ENCODE measurements at regions of chr19 and their contacts with region 1.

Region 1: GRCh38 chr19:39412100-39412866 is at the start of gene PLEKHG2:
- DNase-seq: peak; percentile 99
- H3K4me3 ChIP-seq: peak within 1 kb of the TSS; percentile 70 to 93 (median 92)
- H3K27ac ChIP-seq: peak within 1 kb of the TSS; percentile 97
- H3K4me1 ChIP-seq: peaks cover 38% of the 10 kb centered on the region
- H3K27me3 ChIP-seq: no peaks in the 10 kb centered on the region
- CTCF ChIP-seq: peak; percentile 42 to 94
- total RNA-seq, gene PLEKHG2: 15.5 to 40.6 TPM

Region 2: GRCh38 chr19:39125554-39126311 is 286.6 kb before region 1 on chr19 and contains the start of gene PAK4:
- CTCF ChIA-PET with region 1: no interaction called
- dilution Hi-C with region 1: no loop called
- in situ Hi-C with region 1: no loop called
- intact Hi-C with region 1: loop called (anchors 2 kb)
- DNase-seq: peak; percentile 97
- H3K4me3 ChIP-seq: peak within 1 kb of the TSS; percentile 64 to 86 (median 80)
- H3K27ac ChIP-seq: peak within 1 kb of the TSS; percentile 65
- H3K4me1 ChIP-seq: peaks cover 13% of the 10 kb centered on the region
- H3K27me3 ChIP-seq: no peaks in the 10 kb centered on the region
- CTCF ChIP-seq: no peak
- total RNA-seq, gene PAK4: 8.8 to 45.1 TPM

Region 3: GRCh38 chr19:39341719-39342604 is 70.3 kb before region 1 on chr19 and contains the start of gene SAMD4B:
- CTCF ChIA-PET with region 1: interaction called, 6 read pairs
- dilution Hi-C with region 1: no loop called
- in situ Hi-C with region 1: no loop called
- intact Hi-C with region 1: loop called (anchors 1 kb)
- DNase-seq: peak; percentile 96
- H3K4me3 ChIP-seq: peak within 1 kb of the TSS; percentile 79 to 83 (median 80)
- H3K27ac ChIP-seq: peak within 1 kb of the TSS; percentile 81
- H3K4me1 ChIP-seq: peaks cover 6% of the 10 kb centered on the region
- H3K27me3 ChIP-seq: no peaks in the 10 kb centered on the region
- CTCF ChIP-seq: peak; percentile 32 to 71
- total RNA-seq, gene SAMD4B: 54.3 to 95.2 TPM

Region 4: DNA sequence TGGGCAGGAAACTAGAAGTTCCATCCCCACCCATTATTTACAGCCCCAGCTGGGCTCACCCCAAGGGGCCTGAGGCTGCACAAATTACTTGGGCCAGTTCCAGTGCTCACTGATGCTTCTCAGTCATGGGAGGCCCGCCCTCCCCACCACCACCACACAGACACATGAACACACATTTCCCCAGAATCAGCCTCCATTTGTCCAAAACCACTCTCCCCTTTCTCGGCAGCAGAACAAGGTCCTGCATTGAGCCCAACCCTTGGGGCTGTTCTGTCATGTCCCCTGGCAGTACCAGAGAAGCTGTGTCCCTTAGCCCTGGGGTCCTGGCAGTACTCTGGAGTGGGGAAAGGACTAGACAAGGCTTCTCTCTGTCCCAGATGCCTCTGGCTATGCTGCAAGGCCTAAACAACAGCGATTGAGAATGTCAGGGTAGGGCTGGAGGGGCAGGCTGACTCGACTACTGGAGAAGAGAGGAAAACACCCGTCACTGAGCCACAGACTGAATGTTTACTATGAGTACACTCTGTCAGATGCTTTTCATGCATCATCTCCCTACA is 48.3 kb before region 1 on chr19:
- CTCF ChIA-PET with region 1: no interaction called
- dilution Hi-C with region 1: no loop called
- in situ Hi-C with region 1: no loop called
- intact Hi-C with region 1: no loop called
- DNase-seq: no peak
- H3K4me3 ChIP-seq: no peak overlapping the region
- H3K27ac ChIP-seq: no peak overlapping the region
- H3K4me1 ChIP-seq: peaks cover 19% of the 10 kb centered on the region
- H3K27me3 ChIP-seq: no peaks in the 10 kb centered on the region
- CTCF ChIP-seq: no peak

Region 5: DNA sequence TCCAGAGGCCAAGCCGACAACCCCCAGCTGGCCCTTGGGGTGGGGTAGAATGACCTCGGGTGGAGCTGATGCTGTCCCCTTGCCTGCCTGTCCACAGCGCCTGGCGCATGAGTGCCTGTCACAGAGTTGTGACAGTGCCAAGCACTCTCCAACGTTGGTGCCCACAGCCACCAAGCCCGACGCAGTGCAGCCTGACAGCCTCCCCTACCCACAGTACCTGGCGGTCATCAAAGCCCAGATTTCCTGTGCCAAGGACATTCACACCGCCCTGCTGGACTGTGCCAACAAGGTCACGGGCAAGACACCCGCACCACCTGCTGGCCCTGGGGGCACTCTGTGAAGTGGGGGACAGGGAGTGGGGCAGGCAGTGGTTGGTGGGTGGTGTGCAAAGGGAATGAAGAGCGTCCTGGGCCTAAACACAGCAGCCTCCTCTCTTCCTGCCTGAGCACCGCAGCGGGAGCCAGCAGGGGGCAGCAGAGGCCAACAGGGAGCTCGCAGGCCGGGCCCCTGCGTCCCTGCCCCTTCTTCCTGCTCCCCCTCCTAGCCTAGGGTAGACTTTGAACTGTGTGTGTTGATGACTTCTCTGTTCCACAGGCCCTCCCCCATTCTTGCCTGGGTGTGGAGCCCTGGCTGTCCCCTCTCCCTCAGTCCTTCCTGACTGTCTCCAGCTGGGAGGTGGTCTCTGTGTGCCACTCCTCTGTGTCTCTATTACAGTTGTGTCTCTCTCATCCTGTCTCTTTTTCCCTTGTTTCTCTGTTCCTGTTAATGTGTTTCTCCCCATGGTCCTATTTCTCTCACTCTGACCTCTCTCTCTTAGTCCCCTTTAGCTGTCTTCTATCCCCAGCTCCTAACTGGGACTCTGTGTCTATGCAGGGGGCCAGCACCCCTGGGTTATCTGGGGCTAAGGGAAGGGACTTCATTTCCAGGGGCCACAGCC is 14.7 kb before region 1 on chr19:
- CTCF ChIA-PET with region 1: interaction called, 11 read pairs
- dilution Hi-C with region 1: no loop called
- in situ Hi-C with region 1: no loop called
- intact Hi-C with region 1: loop called (anchors 1 kb)
- DNase-seq: peak; percentile 75
- H3K4me3 ChIP-seq: no peak overlapping the region
- H3K27ac ChIP-seq: peak overlapping the region; percentile 97
- H3K4me1 ChIP-seq: peaks cover 32% of the 10 kb centered on the region
- H3K27me3 ChIP-seq: no peaks in the 10 kb centered on the region
- CTCF ChIP-seq: peak; percentile 97 to 99

Region 6: GRCh38 chr19:39435499-39436349 is 23.4 kb after region 1 on chr19 and contains the start of gene RPS16:
- CTCF ChIA-PET with region 1: no interaction called
- dilution Hi-C with region 1: no loop called
- in situ Hi-C with region 1: no loop called
- intact Hi-C with region 1: loop called (anchors 1 kb)
- DNase-seq: peak; percentile 95
- H3K4me3 ChIP-seq: peak within 1 kb of the TSS; percentile 94 to 98 (median 95)
- H3K27ac ChIP-seq: peak within 1 kb of the TSS; percentile 78
- H3K4me1 ChIP-seq: peaks cover 11% of the 10 kb centered on the region
- H3K27me3 ChIP-seq: no peaks in the 10 kb centered on the region
- CTCF ChIP-seq: no peak
- total RNA-seq, gene RPS16: 361 to 1,710 TPM

Region 7: DNA sequence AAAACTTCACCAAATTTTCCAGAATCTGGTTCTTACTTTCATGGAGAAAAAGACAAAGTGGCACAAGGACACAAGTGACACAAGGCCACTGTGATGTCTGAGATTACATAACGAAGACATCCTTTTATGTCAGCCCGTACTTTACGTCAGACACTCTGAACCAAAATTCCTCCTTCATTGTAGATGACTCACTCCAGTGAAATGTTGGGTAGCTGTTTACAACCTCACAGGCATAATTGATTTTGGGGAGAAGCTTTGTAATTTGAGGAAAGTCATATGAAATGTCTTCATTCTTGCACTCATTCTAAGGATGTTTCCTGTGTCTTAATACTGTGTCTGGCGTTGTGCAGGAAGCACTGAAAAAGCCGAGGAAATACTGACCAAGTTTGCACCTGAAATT is 272.0 kb after region 1 on chr19:
- CTCF ChIA-PET with region 1: no interaction called
- dilution Hi-C with region 1: no loop called
- in situ Hi-C with region 1: no loop called
- intact Hi-C with region 1: no loop called
- DNase-seq: no peak
- H3K4me3 ChIP-seq: no peak overlapping the region
- H3K27ac ChIP-seq: no peak overlapping the region
- H3K4me1 ChIP-seq: no peaks in the 10 kb centered on the region
- H3K27me3 ChIP-seq: no peaks in the 10 kb centered on the region
- CTCF ChIP-seq: no peak